ENCODE measurements at regions of chrX and their contacts with region 1.

Region 1: DNA sequence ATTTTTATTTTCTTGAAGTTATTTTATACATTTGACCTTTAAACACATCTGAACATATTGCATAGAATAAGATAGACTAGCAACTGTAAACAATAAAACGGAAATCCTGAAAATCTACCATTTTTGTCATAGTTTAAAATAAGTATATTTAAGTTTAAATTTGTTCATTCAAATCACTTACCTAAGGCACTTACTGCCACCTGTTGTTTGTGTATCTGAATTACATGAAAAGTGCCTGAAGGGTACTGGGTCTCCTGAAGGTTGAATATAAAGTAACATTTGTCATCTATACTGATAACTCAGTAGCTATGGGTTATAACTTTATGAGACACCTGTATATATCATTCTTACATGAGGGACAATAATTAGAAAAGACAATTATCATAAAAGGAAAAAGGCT is 38.6 kb downstream of the TRPC5 start:
- DNase-seq: no peak
- H3K4me3 Mint-ChIP-seq: no peak overlapping the region
- H3K27ac Mint-ChIP-seq: no peak overlapping the region
- H3K4me1 Mint-ChIP-seq: no peaks in the 10 kb centered on the region
- H3K27me3 Mint-ChIP-seq: peaks cover 5% of the 10 kb centered on the region

Region 2: DNA sequence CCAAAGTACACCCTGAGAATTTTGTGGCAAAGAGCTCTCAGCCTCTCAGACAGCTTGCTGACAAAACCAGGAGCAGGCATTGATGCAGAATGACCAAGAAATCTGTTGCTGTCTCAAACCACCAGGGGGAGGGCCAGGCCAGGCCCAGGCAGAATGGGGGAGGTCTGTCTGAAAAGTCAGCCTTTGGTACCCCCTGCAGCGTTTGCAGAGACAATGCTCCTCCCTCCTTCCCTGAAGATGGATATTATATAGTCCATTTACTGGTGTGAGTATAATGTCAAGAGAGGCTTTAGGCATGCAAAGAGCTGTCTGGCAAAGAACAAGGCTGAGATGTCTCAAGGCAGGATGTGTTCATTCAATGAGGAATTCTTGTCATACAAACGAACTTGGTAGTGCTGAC is 220.9 kb before region 1 on chrX:
- CTCF ChIA-PET with region 1: no interaction called
- intact Hi-C with region 1: loop called (anchors 2 kb)
- DNase-seq: peak; percentile 4
- H3K4me3 Mint-ChIP-seq: no peak overlapping the region
- H3K27ac Mint-ChIP-seq: no peak overlapping the region
- H3K4me1 Mint-ChIP-seq: no peaks in the 10 kb centered on the region
- H3K27me3 Mint-ChIP-seq: no peaks in the 10 kb centered on the region

Region 3: DNA sequence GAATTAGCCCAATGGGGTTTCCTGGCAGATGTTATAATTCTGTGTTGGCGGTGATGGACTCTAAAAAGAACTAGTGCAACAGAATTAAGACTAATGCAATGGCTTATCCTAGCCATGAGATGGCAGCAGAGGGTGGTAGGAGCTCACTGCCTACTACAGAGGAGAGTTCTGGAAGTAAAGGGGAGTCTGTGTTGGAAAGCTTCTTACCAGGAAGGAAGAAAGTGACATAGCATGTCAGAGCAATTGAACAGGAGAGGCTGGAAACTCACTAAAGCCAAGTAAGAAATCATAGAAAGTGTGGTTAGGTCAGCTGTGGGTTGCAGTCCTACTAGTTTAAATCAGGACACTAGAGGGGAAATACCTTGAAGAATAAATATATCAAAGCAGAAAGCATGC is 174.4 kb before region 1 on chrX:
- CTCF ChIA-PET with region 1: interaction called, 4 read pairs
- intact Hi-C with region 1: loop called (anchors 1 kb)
- DNase-seq: peak; percentile 5
- H3K4me3 Mint-ChIP-seq: no peak overlapping the region
- H3K27ac Mint-ChIP-seq: no peak overlapping the region
- H3K4me1 Mint-ChIP-seq: peaks cover 5% of the 10 kb centered on the region
- H3K27me3 Mint-ChIP-seq: peaks cover 4% of the 10 kb centered on the region

Region 4: GRCh38 chrX:112078606-112079005 is 34.6 kb after region 1 on chrX:
- CTCF ChIA-PET with region 1: no interaction called
- intact Hi-C with region 1: no loop called
- DNase-seq: no peak
- H3K4me3 Mint-ChIP-seq: no peak overlapping the region
- H3K27ac Mint-ChIP-seq: no peak overlapping the region
- H3K4me1 Mint-ChIP-seq: no peaks in the 10 kb centered on the region
- H3K27me3 Mint-ChIP-seq: peaks cover 21% of the 10 kb centered on the region

Region 5: GRCh38 chrX:112642349-112642748 is 598.4 kb after region 1 on chrX:
- CTCF ChIA-PET with region 1: no interaction called
- intact Hi-C with region 1: loop called (anchors 5 kb)
- DNase-seq: peak; percentile 42
- H3K4me3 Mint-ChIP-seq: no peak overlapping the region
- H3K27ac Mint-ChIP-seq: no peak overlapping the region
- H3K4me1 Mint-ChIP-seq: peaks cover 20% of the 10 kb centered on the region
- H3K27me3 Mint-ChIP-seq: no peaks in the 10 kb centered on the region